ENCODE measurements at regions of chr1 and their contacts with region 1.

Region 1: GRCh38 chr1:101309334-101310311 is 72.8 kb downstream of the S1PR1 start:
- DNase-seq: peak; percentile 57 to 96 (median 80)
- ATAC-seq: peak; percentile 75
- H3K4me3 ChIP-seq: peak overlapping the region; percentile 34 to 44
- H3K4me3 Mint-ChIP-seq: peak overlapping the region; percentile 82
- H3K27ac ChIP-seq: peak overlapping the region; percentile 82 to 87
- H3K27ac Mint-ChIP-seq: peak overlapping the region; percentile 99
- H3K4me1 ChIP-seq: peaks cover 58% of the 10 kb centered on the region
- H3K4me1 Mint-ChIP-seq: peaks cover 73% of the 10 kb centered on the region
- H3K27me3 ChIP-seq: no peaks in the 10 kb centered on the region
- H3K27me3 Mint-ChIP-seq: no peaks in the 10 kb centered on the region
- CTCF ChIP-seq: peak; percentile 85

Region 2: DNA sequence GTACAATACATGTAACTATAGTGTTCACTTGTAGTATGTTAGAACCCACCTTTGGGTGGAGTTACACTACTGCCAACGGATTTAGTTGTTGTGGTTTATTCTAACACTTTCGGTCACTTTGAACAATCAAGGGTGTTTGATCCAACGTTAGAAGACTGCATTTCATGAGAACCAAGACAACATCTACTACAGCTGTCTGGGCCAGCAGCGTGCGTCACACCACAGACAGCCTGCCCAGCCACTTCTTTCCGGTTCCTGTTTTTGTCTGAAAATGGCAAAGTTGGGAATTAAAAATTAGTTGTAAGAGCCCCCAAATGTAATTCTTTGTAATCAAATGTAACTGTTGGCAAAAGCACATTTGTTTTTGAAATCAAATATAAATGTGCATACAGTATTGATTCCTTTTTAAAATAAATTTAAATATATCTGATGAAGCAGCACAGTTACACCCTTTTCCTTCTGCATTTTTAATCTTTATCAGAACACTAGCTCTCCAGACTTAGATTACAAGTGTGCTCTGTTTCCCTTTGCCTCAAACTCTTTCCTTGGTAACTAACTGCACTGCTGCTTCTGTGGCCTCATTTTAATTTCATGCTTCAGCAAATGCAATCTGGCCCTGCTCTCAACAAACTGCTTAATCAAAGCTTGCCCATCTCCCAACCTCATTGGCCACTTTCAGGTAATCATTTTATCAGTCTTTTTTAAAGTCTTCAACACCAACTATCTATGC is 197.4 kb before region 1 on chr1:
- CTCF ChIA-PET with region 1: no interaction called
- POLR2A ChIA-PET with region 1: no interaction called
- intact Hi-C with region 1: loop called in 1 of 2 experiments (anchors 5 kb)
- DNase-seq: peak; percentile 53 to 96 (median 73)
- ATAC-seq: peak; percentile 89
- H3K4me3 ChIP-seq: peak overlapping the region in 1 of 2 experiments; percentile 23
- H3K4me3 Mint-ChIP-seq: peak overlapping the region; percentile 66
- H3K27ac ChIP-seq: peak overlapping the region; percentile 84 to 93
- H3K27ac Mint-ChIP-seq: peak overlapping the region; percentile 99
- H3K4me1 ChIP-seq: peaks cover 42% of the 10 kb centered on the region
- H3K4me1 Mint-ChIP-seq: peaks cover 64% of the 10 kb centered on the region
- H3K27me3 ChIP-seq: no peaks in the 10 kb centered on the region
- H3K27me3 Mint-ChIP-seq: no peaks in the 10 kb centered on the region
- CTCF ChIP-seq: no peak

Region 3: GRCh38 chr1:101325144-101325543 is 15.5 kb after region 1 on chr1:
- CTCF ChIA-PET with region 1: interaction called, 44 read pairs
- POLR2A ChIA-PET with region 1: interaction called, 11 read pairs
- intact Hi-C with region 1: loop called in 1 of 2 experiments (anchors 2 kb)
- DNase-seq: no peak
- ATAC-seq: no peak
- H3K4me3 ChIP-seq: no peak overlapping the region
- H3K4me3 Mint-ChIP-seq: no peak overlapping the region
- H3K27ac ChIP-seq: no peak overlapping the region
- H3K27ac Mint-ChIP-seq: no peak overlapping the region
- H3K4me1 ChIP-seq: no peaks in the 10 kb centered on the region
- H3K4me1 Mint-ChIP-seq: peaks cover 2% of the 10 kb centered on the region
- H3K27me3 ChIP-seq: no peaks in the 10 kb centered on the region
- H3K27me3 Mint-ChIP-seq: no peaks in the 10 kb centered on the region
- CTCF ChIP-seq: no peak

Region 4: DNA sequence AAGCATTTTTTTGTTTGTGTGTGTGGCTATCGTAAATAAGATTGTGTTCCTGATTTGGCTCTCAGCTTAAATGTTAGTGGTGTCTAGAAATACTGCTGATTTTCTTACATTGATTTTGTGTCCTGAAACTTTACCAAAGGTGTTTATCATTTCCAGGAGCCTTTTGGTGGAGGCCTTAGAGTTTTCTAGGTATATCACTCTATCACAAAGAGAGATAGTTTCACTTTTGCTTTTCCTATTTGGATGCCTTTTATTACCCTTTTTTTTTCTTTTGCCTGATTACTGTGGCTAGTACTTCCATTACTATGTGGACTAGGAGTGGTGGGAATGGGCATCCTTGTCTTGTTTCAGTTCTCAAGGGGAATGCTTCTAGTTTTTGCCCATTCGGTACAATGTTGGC is 36.8 kb after region 1 on chr1:
- CTCF ChIA-PET with region 1: interaction called, 135 read pairs
- POLR2A ChIA-PET with region 1: interaction called, 9 read pairs
- intact Hi-C with region 1: no loop called
- DNase-seq: peak in 1 of 9 experiments; percentile 29
- ATAC-seq: no peak
- H3K4me3 ChIP-seq: no peak overlapping the region
- H3K4me3 Mint-ChIP-seq: peak overlapping the region; percentile 77
- H3K27ac ChIP-seq: no peak overlapping the region
- H3K27ac Mint-ChIP-seq: peak overlapping the region; percentile 86
- H3K4me1 ChIP-seq: no peaks in the 10 kb centered on the region
- H3K4me1 Mint-ChIP-seq: peaks cover 39% of the 10 kb centered on the region
- H3K27me3 ChIP-seq: no peaks in the 10 kb centered on the region
- H3K27me3 Mint-ChIP-seq: no peaks in the 10 kb centered on the region
- CTCF ChIP-seq: no peak

Region 5: DNA sequence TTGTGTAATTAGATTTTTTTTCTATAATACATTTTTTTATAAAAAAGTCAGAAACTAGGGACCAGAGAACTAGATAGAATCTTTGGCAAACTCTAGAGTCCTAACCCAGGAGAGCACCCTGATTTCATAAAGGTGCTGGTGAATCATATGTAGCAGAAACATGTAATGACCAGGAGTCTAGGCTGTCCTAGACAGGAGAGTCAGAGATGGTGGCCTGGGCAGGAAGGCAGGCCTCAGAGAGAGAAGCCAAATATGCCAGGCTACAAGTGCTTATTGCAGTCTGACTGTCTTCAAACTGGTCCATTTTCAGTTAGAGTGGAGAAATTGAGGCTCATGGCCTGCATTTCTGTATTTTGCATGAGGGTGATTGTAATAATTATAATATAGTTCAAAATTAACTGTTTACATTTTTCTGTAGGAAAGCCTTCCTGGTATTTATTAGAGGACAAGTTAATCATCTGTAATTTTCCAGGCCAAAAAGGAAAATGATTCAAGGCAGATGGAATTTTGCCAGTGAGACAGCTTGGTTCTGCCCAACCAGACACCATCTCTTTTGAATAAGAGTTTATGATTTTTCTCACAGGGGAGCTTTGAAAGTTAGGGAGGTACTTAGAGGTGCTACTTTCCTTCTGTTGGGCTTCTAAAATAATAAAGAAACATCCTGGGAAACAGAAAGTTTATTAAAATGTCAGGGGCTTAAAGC is 57.0 kb after region 1 on chr1:
- CTCF ChIA-PET with region 1: interaction called, 10 read pairs
- POLR2A ChIA-PET with region 1: interaction called, 3 read pairs
- intact Hi-C with region 1: no loop called
- DNase-seq: no peak
- ATAC-seq: no peak
- H3K4me3 ChIP-seq: no peak overlapping the region
- H3K4me3 Mint-ChIP-seq: no peak overlapping the region
- H3K27ac ChIP-seq: no peak overlapping the region
- H3K27ac Mint-ChIP-seq: no peak overlapping the region
- H3K4me1 ChIP-seq: no peaks in the 10 kb centered on the region
- H3K4me1 Mint-ChIP-seq: no peaks in the 10 kb centered on the region
- H3K27me3 ChIP-seq: no peaks in the 10 kb centered on the region
- H3K27me3 Mint-ChIP-seq: no peaks in the 10 kb centered on the region
- CTCF ChIP-seq: no peak

Region 6: DNA sequence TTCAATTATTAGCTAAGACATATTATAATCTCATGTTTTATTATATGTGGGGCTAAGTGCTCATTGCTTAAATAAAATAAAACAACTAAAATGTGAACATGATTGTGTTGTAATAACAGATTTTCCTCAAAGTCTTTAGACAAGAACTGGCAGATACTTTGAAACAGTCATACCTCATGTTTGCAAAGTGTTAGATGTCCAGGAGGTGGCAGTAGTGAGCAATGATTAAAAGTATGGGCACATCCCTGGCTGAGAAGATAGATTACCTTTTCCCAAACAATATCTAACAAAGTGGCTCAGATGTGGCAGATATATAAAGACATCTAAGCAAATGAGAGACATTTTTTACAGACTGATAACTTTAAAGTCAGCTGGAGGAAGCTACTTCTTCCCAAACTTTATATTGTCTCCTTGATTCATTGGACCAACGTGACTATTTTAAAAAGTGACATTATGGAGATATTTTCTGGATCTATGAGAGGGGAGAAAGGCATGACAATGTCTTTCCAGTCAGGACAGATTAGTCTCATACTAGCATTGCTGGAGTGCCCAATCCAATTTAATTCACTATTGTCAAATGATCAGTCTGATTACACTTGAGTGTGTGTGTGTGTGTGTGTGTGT is 197.0 kb after region 1 on chr1:
- CTCF ChIA-PET with region 1: interaction called, 8 read pairs
- POLR2A ChIA-PET with region 1: no interaction called
- intact Hi-C with region 1: loop called (anchors 5 to 10 kb)
- DNase-seq: peak in 7 of 9 experiments; percentile 5 to 65 (median 35)
- ATAC-seq: peak; percentile 54
- H3K4me3 ChIP-seq: no peak overlapping the region
- H3K4me3 Mint-ChIP-seq: no peak overlapping the region
- H3K27ac ChIP-seq: no peak overlapping the region
- H3K27ac Mint-ChIP-seq: no peak overlapping the region
- H3K4me1 ChIP-seq: no peaks in the 10 kb centered on the region
- H3K4me1 Mint-ChIP-seq: no peaks in the 10 kb centered on the region
- H3K27me3 ChIP-seq: no peaks in the 10 kb centered on the region
- H3K27me3 Mint-ChIP-seq: no peaks in the 10 kb centered on the region
- CTCF ChIP-seq: peak; percentile 90